Naive thymus-derived CD4-positive, alpha-beta T cell (primary cell): ENCODE measurements at regions of chr1 and their contacts with region 1.

Region 1: DNA sequence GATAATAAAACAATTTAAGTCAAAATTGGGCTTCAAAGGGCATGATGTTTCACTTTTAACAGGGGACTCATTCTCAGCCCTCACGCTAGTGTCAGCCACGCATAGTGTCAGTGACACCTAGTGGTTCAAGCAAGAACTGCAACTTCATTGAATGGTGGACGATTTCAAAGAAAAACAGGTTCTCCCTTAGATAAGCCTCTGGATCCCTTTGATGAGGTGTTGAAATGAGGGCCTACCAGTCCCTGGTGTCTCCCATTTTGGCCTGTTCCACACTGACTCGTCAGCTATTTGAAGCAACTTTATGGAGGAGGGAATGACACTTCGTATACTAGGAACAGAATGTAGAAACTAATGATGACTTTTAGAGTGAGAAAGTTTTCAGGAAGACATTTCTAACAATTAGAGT is 56.2 kb downstream of the FCRL5 start:
- DNase-seq: peak in 5 of 9 donors; percentile 10 to 46 (median 35)
- ATAC-seq: peak; percentile 85
- H3K4me3 ChIP-seq: no peak overlapping the region
- H3K4me3 Mint-ChIP-seq: no peak overlapping the region
- H3K27ac ChIP-seq: no peak overlapping the region
- H3K27ac Mint-ChIP-seq: no peak overlapping the region
- H3K4me1 ChIP-seq: no peaks in the 10 kb centered on the region
- H3K4me1 Mint-ChIP-seq: peaks cover 0 to 5% (median 0%) of the 10 kb centered on the region in 7 donors
- H3K27me3 ChIP-seq: no peaks in the 10 kb centered on the region
- H3K27me3 Mint-ChIP-seq: peaks cover 9 to 46% (median 23%) of the 10 kb centered on the region in 5 donors

Region 2: GRCh38 chr1:157369808-157370521 is 126.2 kb before region 1 on chr1:
- CTCF ChIA-PET with region 1: no interaction called
- POLR2A ChIA-PET with region 1: no interaction called
- intact Hi-C with region 1: loop called in 1 of 2 experiments (anchors 2 kb)
- DNase-seq: peak in 5 of 9 donors; percentile 14 to 34 (median 29)
- ATAC-seq: peak; percentile 76
- H3K4me3 ChIP-seq: no peak overlapping the region
- H3K4me3 Mint-ChIP-seq: no peak overlapping the region
- H3K27ac ChIP-seq: no peak overlapping the region
- H3K27ac Mint-ChIP-seq: no peak overlapping the region
- H3K4me1 ChIP-seq: no peaks in the 10 kb centered on the region
- H3K4me1 Mint-ChIP-seq: no peaks in the 10 kb centered on the region
- H3K27me3 ChIP-seq: no peaks in the 10 kb centered on the region
- H3K27me3 Mint-ChIP-seq: peaks cover 15 to 24% (median 21%) of the 10 kb centered on the region in 5 donors

Region 3: GRCh38 chr1:157380523-157380922 is 115.6 kb before region 1 on chr1:
- CTCF ChIA-PET with region 1: no interaction called
- POLR2A ChIA-PET with region 1: no interaction called
- intact Hi-C with region 1: no loop called
- DNase-seq: no peak
- ATAC-seq: no peak
- H3K4me3 ChIP-seq: no peak overlapping the region
- H3K4me3 Mint-ChIP-seq: no peak overlapping the region
- H3K27ac ChIP-seq: no peak overlapping the region
- H3K27ac Mint-ChIP-seq: no peak overlapping the region
- H3K4me1 ChIP-seq: no peaks in the 10 kb centered on the region
- H3K4me1 Mint-ChIP-seq: peaks cover 0 to 7% (median 0%) of the 10 kb centered on the region in 7 donors
- H3K27me3 ChIP-seq: peaks cover 0 to 3% of the 10 kb centered on the region in 2 donors
- H3K27me3 Mint-ChIP-seq: peaks cover 18 to 61% (median 31%) of the 10 kb centered on the region in 5 donors

Region 4: DNA sequence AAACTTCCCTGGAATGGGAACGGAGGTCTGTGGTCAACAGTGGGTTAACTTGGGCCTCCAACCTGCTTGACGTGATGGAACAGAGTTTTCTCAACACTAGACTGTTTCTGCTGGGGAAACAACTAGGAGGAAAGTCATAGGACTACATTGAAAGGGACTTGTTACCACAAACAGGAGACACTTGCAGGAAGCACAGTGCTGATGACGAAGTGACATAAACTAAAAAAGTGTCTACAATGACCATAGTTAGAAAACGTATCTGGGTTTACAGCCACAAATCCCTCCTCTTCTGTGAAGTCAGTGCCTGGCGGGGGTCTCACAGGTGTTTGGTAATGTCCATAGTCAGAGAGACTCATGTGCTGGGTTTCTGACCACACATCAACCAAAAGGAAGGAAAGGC is 30.1 kb before region 1 on chr1:
- CTCF ChIA-PET with region 1: no interaction called
- POLR2A ChIA-PET with region 1: no interaction called
- intact Hi-C with region 1: no loop called
- DNase-seq: no peak
- ATAC-seq: no peak
- H3K4me3 ChIP-seq: no peak overlapping the region
- H3K4me3 Mint-ChIP-seq: no peak overlapping the region
- H3K27ac ChIP-seq: no peak overlapping the region
- H3K27ac Mint-ChIP-seq: no peak overlapping the region
- H3K4me1 ChIP-seq: no peaks in the 10 kb centered on the region
- H3K4me1 Mint-ChIP-seq: no peaks in the 10 kb centered on the region
- H3K27me3 ChIP-seq: no peaks in the 10 kb centered on the region
- H3K27me3 Mint-ChIP-seq: peaks cover 0 to 25% (median 4%) of the 10 kb centered on the region in 5 donors

Region 5: GRCh38 chr1:158117854-158118704 is 622.0 kb after region 1 on chr1:
- CTCF ChIA-PET with region 1: no interaction called
- POLR2A ChIA-PET with region 1: no interaction called
- intact Hi-C with region 1: no loop called
- DNase-seq: peak in 6 of 9 donors; percentile 30 to 63 (median 46)
- ATAC-seq: peak; percentile 83
- H3K4me3 ChIP-seq: peak overlapping the region; percentile 2
- H3K4me3 Mint-ChIP-seq: peak overlapping the region; percentile 21 to 78 (median 64)
- H3K27ac ChIP-seq: no peak overlapping the region
- H3K27ac Mint-ChIP-seq: no peak overlapping the region
- H3K4me1 ChIP-seq: no peaks in the 10 kb centered on the region
- H3K4me1 Mint-ChIP-seq: peaks cover 7 to 17% (median 15%) of the 10 kb centered on the region in 7 donors
- H3K27me3 ChIP-seq: no peaks in the 10 kb centered on the region
- H3K27me3 Mint-ChIP-seq: peaks cover 58 to 70% (median 63%) of the 10 kb centered on the region in 5 donors